Heart left ventricle (tissue), 16 donors: ENCODE measurements at regions of chr2 and their contacts with region 1.

Region 1: DNA sequence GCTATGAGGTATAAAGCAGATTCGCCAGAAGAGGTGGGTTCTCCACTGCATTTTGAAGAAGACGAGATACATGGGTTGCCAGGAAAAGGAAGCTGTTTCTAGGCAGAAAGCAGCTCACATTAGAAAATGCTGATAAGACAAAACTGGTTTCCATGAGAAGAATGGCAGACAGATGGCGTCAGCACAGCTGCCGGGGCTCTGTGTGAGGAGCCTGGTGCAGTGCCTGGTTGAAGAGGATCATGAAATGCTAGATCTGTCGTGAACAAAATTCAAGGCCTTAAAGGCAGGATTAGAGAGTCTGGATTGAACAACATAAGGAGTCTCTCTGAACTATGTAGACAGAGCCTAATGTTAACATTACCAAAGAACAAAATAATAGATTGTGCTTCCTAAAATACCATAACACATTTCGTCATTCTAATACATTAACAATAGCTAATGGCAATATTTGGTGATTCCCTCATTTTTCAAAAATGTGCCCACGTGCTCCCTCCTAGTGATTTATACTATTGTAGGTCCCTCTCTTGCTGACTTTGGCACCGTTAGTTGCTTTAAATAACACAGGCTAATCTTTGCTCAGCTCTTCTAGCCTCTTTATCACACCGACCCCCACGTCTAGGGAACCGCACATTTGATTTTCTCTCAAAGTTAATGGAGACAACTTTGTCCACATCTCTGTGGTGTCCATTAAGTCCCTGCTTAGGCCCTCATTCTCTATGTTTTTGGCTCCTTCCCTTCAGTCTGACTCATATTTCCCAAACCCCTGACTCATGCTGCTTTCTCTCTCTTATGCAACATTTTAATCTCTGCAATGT is 38.2 kb downstream of the EFEMP1 start:
- DNase-seq: peak in 2 of 5 donors; percentile 22 to 28
- ATAC-seq: peak; percentile 78 to 90 (median 86)
- H3K4me3 ChIP-seq: no peak overlapping the region
- H3K27ac ChIP-seq: peak overlapping the region; percentile 33 to 82 (median 59)
- H3K4me1 ChIP-seq: peaks cover 0 to 55% (median 15%) of the 10 kb centered on the region in 12 donors
- H3K27me3 ChIP-seq: no peaks in the 10 kb centered on the region
- CTCF ChIP-seq: no peak
- POLR2A ChIP-seq: no peak

Region 2: GRCh38 chr2:55809875-55810621 is 75.3 kb before region 1 on chr2:
- intact Hi-C with region 1: loop called in 1 of 10 experiments (anchors 10 kb)
- DNase-seq: peak in 2 of 5 donors; percentile 47 to 54
- ATAC-seq: peak; percentile 69 to 90 (median 84)
- H3K4me3 ChIP-seq: no peak overlapping the region
- H3K27ac ChIP-seq: no peak overlapping the region
- H3K4me1 ChIP-seq: peaks cover 0 to 11% (median 0%) of the 10 kb centered on the region in 12 donors
- H3K27me3 ChIP-seq: no peaks in the 10 kb centered on the region
- CTCF ChIP-seq: no peak
- POLR2A ChIP-seq: no peak

Region 3: GRCh38 chr2:56077352-56077915 is 192.1 kb after region 1 on chr2:
- intact Hi-C with region 1: no loop called
- DNase-seq: no peak
- ATAC-seq: no peak
- H3K4me3 ChIP-seq: no peak overlapping the region
- H3K27ac ChIP-seq: no peak overlapping the region
- H3K4me1 ChIP-seq: no peaks in the 10 kb centered on the region
- H3K27me3 ChIP-seq: peaks cover 0 to 4% (median 0%) of the 10 kb centered on the region in 9 donors
- CTCF ChIP-seq: peak in 6 of 12 donors; percentile 21 to 45 (median 37)
- POLR2A ChIP-seq: no peak